ENCODE measurements at regions of chr6 and their contacts with region 1.

Region 1: DNA sequence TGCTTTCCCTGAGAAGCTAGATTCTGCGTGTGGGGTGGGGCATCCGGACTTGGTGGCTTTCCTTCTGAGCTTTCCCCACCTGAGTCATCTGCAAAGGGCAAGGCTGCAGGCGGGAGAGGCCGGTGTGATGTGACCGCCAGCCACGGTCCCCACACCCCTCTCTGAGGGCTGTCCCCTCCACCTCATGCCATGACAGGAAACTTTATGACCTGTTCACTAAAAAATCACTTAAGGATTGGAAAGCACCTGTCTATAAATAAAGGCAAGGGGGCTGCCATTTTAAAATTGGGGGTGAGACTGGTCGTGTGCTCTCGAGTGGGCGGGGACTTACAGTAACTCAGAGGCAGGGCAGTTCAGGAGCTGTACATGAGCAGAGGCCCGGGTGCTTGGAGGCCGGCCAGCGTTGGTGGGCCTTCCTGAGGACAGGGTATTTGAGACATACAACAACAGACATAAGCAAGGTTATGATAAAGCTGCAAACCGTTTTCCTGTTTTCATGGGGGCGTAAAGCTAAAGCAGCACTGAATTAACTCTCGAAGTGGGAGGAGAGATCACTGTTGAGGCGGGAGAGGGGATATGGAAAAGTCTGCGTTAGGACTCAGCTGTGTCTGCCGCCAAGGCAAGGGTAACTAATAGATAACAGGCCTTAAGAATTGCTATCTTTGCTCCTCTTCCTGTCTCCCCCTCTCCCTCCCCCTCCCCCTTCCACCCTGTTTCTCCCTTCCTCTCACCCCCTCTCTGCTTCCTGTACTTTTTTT is 16.1 kb upstream of the SERPINB1 start:
- DNase-seq: no peak
- ATAC-seq: no peak
- H3K4me3 ChIP-seq: no peak overlapping the region
- H3K27ac ChIP-seq: peak overlapping the region in 3 of 4 donors; percentile 8 to 62 (median 45)
- H3K4me1 ChIP-seq: peaks cover 30% of the 10 kb centered on the region
- H3K27me3 ChIP-seq: no peaks in the 10 kb centered on the region
- CTCF ChIP-seq: no peak
- POLR2A ChIP-seq: no peak

Region 2: GRCh38 chr6:2783188-2783963 is 74.4 kb before region 1 on chr6:
- intact Hi-C with region 1: loop called (anchors 5 kb)
- DNase-seq: no peak
- ATAC-seq: no peak
- H3K4me3 ChIP-seq: no peak overlapping the region
- H3K27ac ChIP-seq: no peak overlapping the region
- H3K4me1 ChIP-seq: peaks cover 4% of the 10 kb centered on the region
- H3K27me3 ChIP-seq: no peaks in the 10 kb centered on the region
- CTCF ChIP-seq: peak in 1 of 7 experiments; percentile 9
- POLR2A ChIP-seq: no peak

Region 3: GRCh38 chr6:2911171-2911570 is 53.4 kb after region 1 on chr6:
- intact Hi-C with region 1: loop called (anchors 10 kb)
- DNase-seq: no peak
- ATAC-seq: no peak
- H3K4me3 ChIP-seq: no peak overlapping the region
- H3K27ac ChIP-seq: no peak overlapping the region
- H3K4me1 ChIP-seq: no peaks in the 10 kb centered on the region
- H3K27me3 ChIP-seq: no peaks in the 10 kb centered on the region
- CTCF ChIP-seq: no peak
- POLR2A ChIP-seq: no peak